Endothelial cell of umbilical vein (primary cell): ENCODE measurements at regions of chr11 and their contacts with region 1.

Region 1: GRCh38 chr11:17760102-17761029 is 25.8 kb downstream of the KCNC1 start:
- DNase-seq: peak; percentile 49
- H3K4me3 ChIP-seq: no peak overlapping the region
- H3K27ac ChIP-seq: no peak overlapping the region
- H3K4me1 ChIP-seq: no peaks in the 10 kb centered on the region
- H3K27me3 ChIP-seq: no peaks in the 10 kb centered on the region
- CTCF ChIP-seq: peak; percentile 41 to 73
- POLR2A ChIP-seq: no peak

Region 2: DNA sequence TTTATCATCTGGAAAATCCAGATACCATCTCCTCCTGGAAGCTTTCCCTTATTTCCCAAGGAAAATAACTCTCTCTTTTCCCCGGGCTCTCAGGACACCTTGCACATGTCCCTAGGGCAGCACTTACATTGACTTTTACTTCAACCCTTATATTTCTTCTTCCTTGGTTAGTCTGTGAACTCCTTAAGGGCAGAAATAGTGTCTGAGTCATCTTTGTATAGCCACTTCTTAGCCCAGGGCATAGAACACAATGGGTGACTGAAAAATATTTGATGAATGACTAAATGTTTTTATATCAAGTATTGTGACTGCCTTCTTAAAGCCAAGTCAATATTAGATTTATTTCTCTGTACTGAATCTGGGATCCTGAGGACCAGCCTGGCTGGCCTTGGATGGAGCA is 86.4 kb before region 1 on chr11:
- CTCF ChIA-PET with region 1: no interaction called
- POLR2A ChIA-PET with region 1: no interaction called
- dilution Hi-C with region 1: no loop called
- intact Hi-C with region 1: no loop called
- DNase-seq: peak; percentile 36
- H3K4me3 ChIP-seq: no peak overlapping the region
- H3K27ac ChIP-seq: no peak overlapping the region
- H3K4me1 ChIP-seq: no peaks in the 10 kb centered on the region
- H3K27me3 ChIP-seq: peaks cover 3% of the 10 kb centered on the region in 2 experiments
- CTCF ChIP-seq: no peak
- POLR2A ChIP-seq: no peak

Region 3: GRCh38 chr11:17906436-17906835 is 146.1 kb after region 1 on chr11:
- CTCF ChIA-PET with region 1: no interaction called
- POLR2A ChIA-PET with region 1: no interaction called
- dilution Hi-C with region 1: no loop called
- intact Hi-C with region 1: loop called (anchors 1 kb)
- DNase-seq: no peak
- H3K4me3 ChIP-seq: no peak overlapping the region
- H3K27ac ChIP-seq: no peak overlapping the region
- H3K4me1 ChIP-seq: no peaks in the 10 kb centered on the region
- H3K27me3 ChIP-seq: no peaks in the 10 kb centered on the region
- CTCF ChIP-seq: peak in 1 of 2 donors; percentile 12
- POLR2A ChIP-seq: no peak

Region 4: DNA sequence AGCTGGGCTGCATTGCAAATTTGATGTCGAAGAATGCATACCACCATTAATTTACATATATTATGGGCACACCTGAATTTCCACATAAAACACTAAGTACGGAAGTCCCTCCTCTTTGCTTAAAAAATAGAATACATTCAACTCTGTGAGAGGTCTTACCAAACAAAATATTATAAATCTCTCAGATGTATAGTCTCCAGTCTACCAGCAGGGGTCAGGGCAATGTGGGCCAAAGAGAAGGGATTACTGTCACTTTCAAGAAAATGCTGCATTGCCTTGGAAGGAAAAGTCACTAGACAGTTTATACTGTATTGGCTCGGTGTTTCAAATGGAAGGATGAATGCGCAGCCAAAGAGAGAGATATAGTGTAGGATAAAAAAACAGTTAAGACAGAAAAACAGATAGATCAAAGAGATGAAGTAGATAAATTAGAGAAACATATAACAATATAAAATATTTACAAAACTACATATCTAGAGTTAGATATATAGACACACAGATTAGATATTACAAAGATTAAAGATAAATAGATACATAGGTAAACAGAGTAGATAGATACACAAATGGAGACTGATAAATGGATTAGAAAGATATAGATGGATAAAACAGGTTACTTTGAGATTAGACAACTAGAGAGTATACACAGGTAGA is 231.5 kb after region 1 on chr11:
- CTCF ChIA-PET with region 1: no interaction called
- POLR2A ChIA-PET with region 1: no interaction called
- dilution Hi-C with region 1: no loop called
- intact Hi-C with region 1: no loop called
- DNase-seq: peak; percentile 59
- H3K4me3 ChIP-seq: no peak overlapping the region
- H3K27ac ChIP-seq: no peak overlapping the region
- H3K4me1 ChIP-seq: no peaks in the 10 kb centered on the region
- H3K27me3 ChIP-seq: no peaks in the 10 kb centered on the region
- CTCF ChIP-seq: peak; percentile 68 to 70
- POLR2A ChIP-seq: no peak